GM12878 (cell line): ENCODE measurements at regions of chr12 and their contacts with region 1.

Region 1: GRCh38 chr12:14995583-14996425 is 23.0 kb downstream of the PDE6H start:
- DNase-seq: peak; percentile 34
- ATAC-seq: peak; percentile 64
- H3K4me3 ChIP-seq: no peak overlapping the region
- H3K27ac ChIP-seq: no peak overlapping the region
- H3K4me1 ChIP-seq: peaks cover 6% of the 10 kb centered on the region; the same call in 1 of the 2 replicates
- H3K27me3 ChIP-seq: no peaks in the 10 kb centered on the region
- CTCF ChIP-seq: peak; percentile 34 to 62 (median 42); a peak in 4 of 6 replicates
- EP300 ChIP-seq: no peak
- POLR2A ChIP-seq: no peak
- RAD21 ChIP-seq: peak; percentile 87

Region 2: GRCh38 chr12:14629832-14630710 is 365.7 kb before region 1 on chr12:
- CTCF ChIA-PET with region 1: interaction called, 6 read pairs
- POLR2A ChIA-PET with region 1: no interaction called
- RAD21 ChIA-PET with region 1: interaction called, 3 read pairs
- SMC1A ChIA-PET with region 1: no interaction called
- in situ Hi-C with region 1: no loop called
- intact Hi-C with region 1: loop called (anchors 5 kb)
- DNase-seq: no peak
- ATAC-seq: peak; percentile 100
- H3K4me3 ChIP-seq: no peak overlapping the region
- H3K27ac ChIP-seq: no peak overlapping the region
- H3K4me1 ChIP-seq: no peaks in the 10 kb centered on the region
- H3K27me3 ChIP-seq: no peaks in the 10 kb centered on the region
- CTCF ChIP-seq: peak; percentile 98 to 100 (median 99); a peak in 5 of 6 replicates
- EP300 ChIP-seq: no peak
- POLR2A ChIP-seq: no peak
- RAD21 ChIP-seq: peak; percentile 100

Region 3: GRCh38 chr12:14769969-14770495 is 225.8 kb before region 1 on chr12:
- CTCF ChIA-PET with region 1: interaction called, 18 read pairs
- POLR2A ChIA-PET with region 1: no interaction called
- RAD21 ChIA-PET with region 1: interaction called, 11 read pairs
- SMC1A ChIA-PET with region 1: interaction called, 29 read pairs
- in situ Hi-C with region 1: no loop called
- intact Hi-C with region 1: loop called (anchors 5 kb)
- DNase-seq: peak; percentile 84
- ATAC-seq: peak; percentile 63
- H3K4me3 ChIP-seq: peak overlapping the region; percentile 83
- H3K27ac ChIP-seq: peak overlapping the region; percentile 99
- H3K4me1 ChIP-seq: peaks cover 2% of the 10 kb centered on the region
- H3K27me3 ChIP-seq: no peaks in the 10 kb centered on the region
- CTCF ChIP-seq: peak; percentile 81 to 87 (median 87)
- EP300 ChIP-seq: peak; percentile 11 to 58; a peak in 3 of 4 replicates
- POLR2A ChIP-seq: peak; percentile 89
- RAD21 ChIP-seq: peak; percentile 37; the same call in 1 of the 2 replicates

Region 4: DNA sequence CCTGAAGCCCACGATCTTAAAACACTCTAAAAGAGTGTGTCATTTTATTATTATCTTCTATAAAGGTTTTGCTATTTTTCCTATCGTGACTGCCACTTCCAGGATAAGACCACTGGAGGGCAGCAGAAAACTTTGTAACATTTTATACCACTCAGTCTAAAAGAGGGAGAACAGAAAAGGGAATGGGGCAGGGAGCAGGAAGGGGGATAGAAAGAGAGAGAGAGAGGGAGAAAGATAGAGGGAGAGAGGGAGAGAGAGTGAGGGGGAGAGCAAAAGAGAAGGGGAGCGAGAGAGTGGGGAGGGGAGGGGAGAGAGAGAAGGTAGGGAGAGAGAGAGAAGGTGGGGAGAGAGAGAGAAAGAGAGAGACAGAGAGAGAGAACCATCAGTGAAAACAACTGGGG is 150.5 kb before region 1 on chr12:
- CTCF ChIA-PET with region 1: interaction called, 104 read pairs
- POLR2A ChIA-PET with region 1: no interaction called
- RAD21 ChIA-PET with region 1: interaction called, 70 read pairs
- SMC1A ChIA-PET with region 1: interaction called, 242 read pairs
- in situ Hi-C with region 1: loop called (anchors 5 kb)
- intact Hi-C with region 1: loop called (anchors 1 kb)
- DNase-seq: no peak
- ATAC-seq: peak; percentile 82
- H3K4me3 ChIP-seq: no peak overlapping the region
- H3K27ac ChIP-seq: no peak overlapping the region
- H3K4me1 ChIP-seq: no peaks in the 10 kb centered on the region
- H3K27me3 ChIP-seq: no peaks in the 10 kb centered on the region; a peak in 1 of 4 replicates
- CTCF ChIP-seq: peak; percentile 61 to 78 (median 62); a peak in 5 of 6 replicates
- EP300 ChIP-seq: no peak
- POLR2A ChIP-seq: no peak
- RAD21 ChIP-seq: peak; percentile 99

Region 5: GRCh38 chr12:14892726-14893505 is 102.9 kb before region 1 on chr12:
- CTCF ChIA-PET with region 1: interaction called, 11 read pairs
- POLR2A ChIA-PET with region 1: no interaction called
- RAD21 ChIA-PET with region 1: interaction called, 7 read pairs
- SMC1A ChIA-PET with region 1: interaction called, 14 read pairs
- in situ Hi-C with region 1: no loop called
- intact Hi-C with region 1: no loop called
- DNase-seq: no peak
- ATAC-seq: peak; percentile 74
- H3K4me3 ChIP-seq: no peak overlapping the region
- H3K27ac ChIP-seq: no peak overlapping the region
- H3K4me1 ChIP-seq: no peaks in the 10 kb centered on the region
- H3K27me3 ChIP-seq: no peaks in the 10 kb centered on the region; a peak in 1 of 4 replicates
- CTCF ChIP-seq: peak in 2 of 3 experiments; percentile 19 to 44; a peak in 3 of 6 replicates
- EP300 ChIP-seq: no peak
- POLR2A ChIP-seq: no peak
- RAD21 ChIP-seq: no peak; the same call in 1 of the 2 replicates

Region 6: DNA sequence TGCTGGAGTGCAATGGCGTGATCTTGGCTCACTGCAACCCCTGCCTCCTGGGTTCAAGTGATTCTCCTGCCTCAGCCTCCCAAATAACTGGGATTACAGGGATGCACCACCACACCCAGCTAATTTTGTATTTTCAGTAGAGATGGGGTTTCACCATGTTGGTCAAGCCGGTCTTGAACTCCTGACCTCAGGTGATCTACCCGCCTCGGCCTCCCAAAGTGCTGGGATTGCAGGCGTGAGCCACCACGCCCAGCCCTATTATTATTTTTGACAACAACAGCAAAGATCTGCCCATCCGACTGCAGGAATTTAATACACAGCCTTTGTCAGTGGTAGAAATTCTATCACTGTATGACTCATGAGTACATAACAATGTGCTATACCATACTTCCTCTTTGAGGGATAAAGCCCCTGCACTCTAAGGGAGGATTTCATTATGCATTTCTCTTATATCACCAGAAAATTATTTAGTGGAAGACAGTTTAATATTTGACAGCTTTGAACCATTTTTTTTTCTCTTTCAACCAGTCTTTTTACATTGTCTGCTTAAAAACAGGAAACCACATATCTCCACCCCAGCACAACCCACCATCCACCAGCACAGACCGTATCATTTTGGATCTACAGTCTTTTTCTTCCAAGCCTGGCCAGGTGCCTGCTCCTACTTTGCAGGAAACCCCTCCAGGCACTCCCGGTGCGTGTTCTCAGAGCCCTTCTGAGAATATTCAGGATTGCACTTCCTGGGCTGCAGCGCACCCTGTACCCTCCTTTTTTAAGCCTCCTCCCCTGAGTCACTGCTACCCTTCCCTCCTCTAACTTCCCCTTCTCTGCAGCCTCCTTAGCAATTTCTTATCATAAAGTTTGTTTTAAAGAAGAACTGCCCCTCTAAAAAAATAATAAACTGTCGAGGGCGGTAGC is 35.0 kb before region 1 on chr12:
- CTCF ChIA-PET with region 1: interaction called, 7 read pairs
- POLR2A ChIA-PET with region 1: interaction called, 3 read pairs
- RAD21 ChIA-PET with region 1: interaction called, 5 read pairs
- SMC1A ChIA-PET with region 1: interaction called, 11 read pairs
- in situ Hi-C with region 1: no loop called
- intact Hi-C with region 1: loop called (anchors 2 kb)
- DNase-seq: no peak
- ATAC-seq: peak; percentile 61
- H3K4me3 ChIP-seq: peak overlapping the region; percentile 80
- H3K27ac ChIP-seq: peak overlapping the region; percentile 94
- H3K4me1 ChIP-seq: peaks cover 5% of the 10 kb centered on the region
- H3K27me3 ChIP-seq: no peaks in the 10 kb centered on the region
- CTCF ChIP-seq: no peak
- EP300 ChIP-seq: peak; percentile 19 to 51; a peak in 1 of 4 replicates
- POLR2A ChIP-seq: no peak
- RAD21 ChIP-seq: no peak

Region 7: DNA sequence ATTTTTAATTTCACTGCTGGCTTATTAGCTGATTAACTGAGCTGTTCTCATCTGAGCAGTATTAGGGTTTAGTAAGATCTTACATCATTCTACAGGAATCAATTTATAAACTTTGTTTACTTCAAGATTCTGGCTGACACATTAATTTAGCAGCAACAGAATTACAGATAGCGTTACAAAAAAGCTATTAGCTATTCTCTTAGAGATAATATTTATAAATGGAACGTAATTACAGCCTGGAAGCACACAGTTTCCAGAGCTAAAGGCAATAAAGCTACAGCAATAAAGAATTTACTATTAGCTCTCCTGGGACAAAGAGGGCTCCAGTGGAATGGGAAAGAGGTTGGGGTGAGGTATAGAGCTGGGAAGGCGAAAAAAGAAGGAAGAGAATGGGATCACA is 11.7 kb after region 1 on chr12:
- CTCF ChIA-PET with region 1: interaction called, 13 read pairs
- POLR2A ChIA-PET with region 1: no interaction called
- RAD21 ChIA-PET with region 1: interaction called, 3 read pairs
- SMC1A ChIA-PET with region 1: interaction called, 15 read pairs
- in situ Hi-C with region 1: no loop called
- intact Hi-C with region 1: no loop called
- DNase-seq: no peak
- ATAC-seq: no peak
- H3K4me3 ChIP-seq: no peak overlapping the region
- H3K27ac ChIP-seq: no peak overlapping the region
- H3K4me1 ChIP-seq: no peaks in the 10 kb centered on the region
- H3K27me3 ChIP-seq: no peaks in the 10 kb centered on the region; a peak in 1 of 4 replicates
- CTCF ChIP-seq: no peak
- EP300 ChIP-seq: no peak
- POLR2A ChIP-seq: no peak
- RAD21 ChIP-seq: no peak

Region 8: DNA sequence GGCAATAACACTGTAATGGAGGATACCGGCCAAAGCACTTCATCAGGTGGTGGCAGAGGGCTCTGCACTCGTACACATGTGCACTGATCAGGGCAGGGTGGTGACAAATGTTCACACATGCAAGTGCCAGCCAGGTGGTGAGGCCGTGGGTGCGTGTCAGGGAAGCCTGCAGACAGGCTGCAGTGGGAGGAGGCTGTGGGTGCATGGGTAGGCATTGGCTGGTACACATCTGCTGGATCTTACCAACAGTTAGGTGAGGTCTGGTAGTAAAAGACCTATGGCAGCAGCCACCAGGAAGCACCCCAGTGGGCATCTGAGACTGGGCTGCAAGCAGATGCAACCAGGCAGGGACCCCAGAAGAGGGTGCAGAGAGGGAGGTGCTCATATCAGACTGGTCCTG is 42.3 kb after region 1 on chr12:
- CTCF ChIA-PET with region 1: no interaction called
- POLR2A ChIA-PET with region 1: no interaction called
- RAD21 ChIA-PET with region 1: no interaction called
- SMC1A ChIA-PET with region 1: no interaction called
- in situ Hi-C with region 1: no loop called
- intact Hi-C with region 1: no loop called
- DNase-seq: no peak
- ATAC-seq: no peak
- H3K4me3 ChIP-seq: no peak overlapping the region
- H3K27ac ChIP-seq: no peak overlapping the region
- H3K4me1 ChIP-seq: no peaks in the 10 kb centered on the region
- H3K27me3 ChIP-seq: no peaks in the 10 kb centered on the region
- CTCF ChIP-seq: no peak
- EP300 ChIP-seq: no peak
- POLR2A ChIP-seq: no peak
- RAD21 ChIP-seq: no peak